Breast epithelium (tissue), 4 donors: ENCODE measurements at regions of chr6 and their contacts with region 1.

Region 1: DNA sequence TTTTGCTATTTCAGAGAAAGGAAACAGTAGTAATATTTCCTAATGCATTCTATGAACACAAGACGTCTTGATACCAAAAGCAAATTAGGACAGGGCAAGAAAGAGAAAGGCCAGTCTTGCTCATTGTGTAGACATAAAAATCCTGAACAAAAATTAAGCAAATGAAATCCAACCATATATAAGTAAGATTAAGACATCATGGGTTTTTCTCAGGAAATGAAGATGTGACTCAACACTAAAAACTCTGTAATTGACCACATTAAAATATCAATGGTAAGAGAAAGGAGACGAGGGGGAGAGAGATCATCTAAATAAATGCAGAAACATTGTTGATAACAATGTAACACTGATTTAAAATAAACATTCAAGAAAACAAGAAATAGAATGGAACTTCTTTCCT is 205.4 kb downstream of the SOD2 start:
- DNase-seq: no peak
- H3K4me3 ChIP-seq: no peak overlapping the region
- H3K27ac ChIP-seq: no peak overlapping the region
- H3K4me1 ChIP-seq: no peaks in the 10 kb centered on the region
- H3K27me3 ChIP-seq: no peaks in the 10 kb centered on the region
- CTCF ChIP-seq: no peak
- POLR2A ChIP-seq: no peak

Region 2: DNA sequence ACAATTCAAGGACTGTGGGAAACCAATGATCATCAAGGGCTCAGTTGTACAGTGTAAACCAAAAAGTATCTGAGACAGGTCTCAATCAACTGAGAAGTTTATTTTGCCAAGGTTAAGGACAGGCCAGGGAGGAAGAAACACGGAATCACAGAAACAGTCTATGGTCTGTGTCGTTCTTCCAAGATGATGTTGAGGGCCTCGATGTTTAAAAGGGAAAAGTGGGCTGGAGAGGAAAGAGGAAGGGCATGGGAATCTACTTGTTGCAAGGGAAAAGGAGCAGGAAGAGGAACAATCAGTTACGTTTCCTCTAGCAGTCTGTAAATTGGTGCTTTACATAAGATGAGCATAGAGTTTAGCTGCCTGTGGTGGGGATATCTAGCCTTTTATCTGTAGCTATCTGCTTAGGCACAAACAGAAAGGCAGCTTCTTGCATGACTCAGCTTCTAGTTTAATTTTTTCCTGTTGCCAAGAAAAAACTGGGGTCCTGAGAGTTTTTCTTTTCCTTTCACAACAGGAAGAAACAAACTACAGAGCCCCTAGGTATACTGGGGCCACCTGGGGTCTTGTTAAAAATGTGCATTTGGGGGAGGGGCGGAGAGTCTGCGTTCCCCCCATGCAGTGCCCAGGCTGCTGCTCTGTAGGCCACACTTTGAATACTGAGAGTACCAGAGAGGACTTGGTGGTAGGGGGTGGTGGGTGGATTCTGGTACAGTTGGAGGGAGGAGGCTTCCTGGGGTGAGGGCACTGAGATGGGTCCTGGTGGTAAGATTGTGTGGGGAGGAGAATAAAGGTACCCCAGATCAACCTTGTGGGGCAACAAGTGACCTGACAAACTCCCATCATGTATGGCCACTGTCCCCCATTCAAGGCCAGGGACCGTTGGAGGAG is 633.2 kb before region 1 on chr6:
- intact Hi-C with region 1: loop called (anchors 5 kb)
- DNase-seq: no peak
- H3K4me3 ChIP-seq: no peak overlapping the region
- H3K27ac ChIP-seq: peak overlapping the region in 1 of 2 donors; percentile 77
- H3K4me1 ChIP-seq: peaks cover 0 to 4% of the 10 kb centered on the region in 2 donors
- H3K27me3 ChIP-seq: no peaks in the 10 kb centered on the region
- CTCF ChIP-seq: no peak
- POLR2A ChIP-seq: no peak

Region 3: GRCh38 chr6:160810235-160810634 is 1322.6 kb after region 1 on chr6:
- intact Hi-C with region 1: no loop called
- DNase-seq: no peak
- H3K4me3 ChIP-seq: no peak overlapping the region
- H3K27ac ChIP-seq: no peak overlapping the region
- H3K4me1 ChIP-seq: no peaks in the 10 kb centered on the region
- H3K27me3 ChIP-seq: no peaks in the 10 kb centered on the region
- CTCF ChIP-seq: no peak
- POLR2A ChIP-seq: no peak